Heart right ventricle (tissue), 16 donors: ENCODE measurements at regions of chr16 and their contacts with region 1.

Region 1: DNA sequence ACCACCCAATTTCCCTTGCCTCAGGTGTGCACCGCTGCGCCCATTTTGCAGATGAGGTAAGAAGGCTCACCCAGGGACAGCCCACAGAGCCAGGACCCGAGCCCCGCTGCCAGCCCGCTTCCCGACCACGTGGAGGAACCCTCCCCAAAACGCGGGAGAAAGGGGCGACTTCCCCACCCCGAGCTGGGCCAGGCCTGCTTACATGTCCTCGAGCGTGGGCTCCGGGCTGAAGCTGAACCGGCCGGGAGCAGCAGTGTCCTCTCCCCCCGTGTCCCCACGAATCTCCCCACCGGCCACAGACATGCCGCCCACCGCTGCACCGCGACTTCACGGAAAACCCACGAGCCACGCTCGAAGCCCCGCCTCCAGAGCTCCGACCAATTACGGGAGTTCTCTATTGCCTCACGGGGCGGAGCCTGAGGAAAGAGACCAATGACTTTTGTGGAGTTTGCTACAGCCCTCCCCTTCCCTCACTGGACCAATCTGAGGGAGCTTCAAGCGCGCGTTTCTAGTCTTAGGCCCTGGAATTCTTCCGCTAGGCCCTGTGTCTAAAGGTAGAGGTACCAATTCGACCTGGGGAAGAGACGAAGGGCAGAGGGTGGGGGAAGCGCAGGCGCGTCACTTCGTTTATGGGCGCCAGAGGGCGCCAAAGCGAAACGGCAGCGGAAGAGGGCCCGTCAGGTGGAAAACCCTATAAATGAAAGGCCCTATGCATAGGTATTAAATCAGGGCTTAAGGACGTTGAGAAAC is at the start of gene DCTPP1:
- DNase-seq: peak; percentile 90 to 98
- ATAC-seq: peak; percentile 97 to 99 (median 99)
- H3K4me3 ChIP-seq: peak within 1 kb of the TSS; percentile 63 to 97 (median 72)
- H3K27ac ChIP-seq: peak within 1 kb of the TSS in 9 of 10 donors; percentile 60 to 83 (median 74)
- H3K4me1 ChIP-seq: peaks cover 3 to 33% (median 19%) of the 10 kb centered on the region in 9 donors
- H3K27me3 ChIP-seq: no peaks in the 10 kb centered on the region
- CTCF ChIP-seq: peak; percentile 52 to 84 (median 78)
- total RNA-seq, gene DCTPP1: 22.8 to 39.9 (median 29.7) TPM

Region 2: DNA sequence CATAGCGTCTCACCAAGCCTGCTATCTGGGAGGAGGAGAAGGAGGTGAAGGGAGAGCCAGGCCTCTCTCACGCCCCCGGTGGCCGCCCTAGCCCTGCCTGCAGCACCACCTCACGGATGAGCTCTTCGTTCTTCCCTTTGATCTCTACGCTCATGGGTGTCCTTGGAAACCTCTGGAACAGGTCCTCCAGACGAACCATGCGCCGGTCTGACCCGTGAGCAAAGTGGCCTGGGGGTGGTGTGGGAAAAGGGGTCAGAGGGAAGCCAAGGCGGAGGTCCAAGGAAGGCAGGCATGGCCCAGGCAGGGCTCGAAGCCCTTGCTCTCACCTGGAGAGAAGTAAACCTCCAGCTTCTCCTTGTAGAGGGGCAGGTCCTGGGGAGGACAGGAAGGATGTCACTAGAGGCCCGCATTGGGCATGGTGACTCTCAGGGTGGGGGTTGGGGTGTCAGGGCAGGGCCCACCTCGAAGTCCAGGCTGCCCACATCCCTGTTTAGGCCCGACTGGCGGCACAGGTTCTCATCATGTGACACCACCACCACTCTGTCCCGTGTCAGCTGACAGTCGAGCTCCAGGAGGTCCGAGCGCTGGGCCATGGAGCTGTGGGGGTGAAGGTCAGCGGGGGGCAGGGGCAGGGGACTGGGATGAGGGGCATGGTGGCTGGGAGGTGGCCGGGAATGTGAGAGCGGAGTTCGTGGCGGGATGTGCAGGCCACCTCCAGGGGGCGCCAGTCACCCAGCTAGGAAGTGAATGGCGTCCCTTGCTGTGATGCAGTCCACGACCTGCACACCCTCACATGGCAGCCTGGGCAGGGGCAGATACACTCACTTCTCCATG is 317.4 kb before region 1 on chr16:
- intact Hi-C with region 1: loop called in 1 of 10 experiments (anchors 10 kb)
- DNase-seq: peak in 1 of 2 donors; percentile 73
- ATAC-seq: peak in 7 of 8 donors; percentile 15 to 64 (median 50)
- H3K4me3 ChIP-seq: no peak overlapping the region
- H3K27ac ChIP-seq: no peak overlapping the region
- H3K4me1 ChIP-seq: peaks cover 0 to 9% (median 0%) of the 10 kb centered on the region in 9 donors
- H3K27me3 ChIP-seq: no peaks in the 10 kb centered on the region
- CTCF ChIP-seq: peak; percentile 32 to 71 (median 56)

Region 3: GRCh38 chr16:30482366-30482765 is 52.5 kb after region 1 on chr16:
- intact Hi-C with region 1: loop called in 1 of 10 experiments (anchors 10 kb)
- DNase-seq: no peak
- ATAC-seq: no peak
- H3K4me3 ChIP-seq: no peak overlapping the region
- H3K27ac ChIP-seq: no peak overlapping the region
- H3K4me1 ChIP-seq: peaks cover 0 to 8% (median 0%) of the 10 kb centered on the region in 9 donors
- H3K27me3 ChIP-seq: peaks cover 0 to 14% (median 0%) of the 10 kb centered on the region in 7 donors
- CTCF ChIP-seq: peak in 1 of 9 donors; percentile 9

Region 4: DNA sequence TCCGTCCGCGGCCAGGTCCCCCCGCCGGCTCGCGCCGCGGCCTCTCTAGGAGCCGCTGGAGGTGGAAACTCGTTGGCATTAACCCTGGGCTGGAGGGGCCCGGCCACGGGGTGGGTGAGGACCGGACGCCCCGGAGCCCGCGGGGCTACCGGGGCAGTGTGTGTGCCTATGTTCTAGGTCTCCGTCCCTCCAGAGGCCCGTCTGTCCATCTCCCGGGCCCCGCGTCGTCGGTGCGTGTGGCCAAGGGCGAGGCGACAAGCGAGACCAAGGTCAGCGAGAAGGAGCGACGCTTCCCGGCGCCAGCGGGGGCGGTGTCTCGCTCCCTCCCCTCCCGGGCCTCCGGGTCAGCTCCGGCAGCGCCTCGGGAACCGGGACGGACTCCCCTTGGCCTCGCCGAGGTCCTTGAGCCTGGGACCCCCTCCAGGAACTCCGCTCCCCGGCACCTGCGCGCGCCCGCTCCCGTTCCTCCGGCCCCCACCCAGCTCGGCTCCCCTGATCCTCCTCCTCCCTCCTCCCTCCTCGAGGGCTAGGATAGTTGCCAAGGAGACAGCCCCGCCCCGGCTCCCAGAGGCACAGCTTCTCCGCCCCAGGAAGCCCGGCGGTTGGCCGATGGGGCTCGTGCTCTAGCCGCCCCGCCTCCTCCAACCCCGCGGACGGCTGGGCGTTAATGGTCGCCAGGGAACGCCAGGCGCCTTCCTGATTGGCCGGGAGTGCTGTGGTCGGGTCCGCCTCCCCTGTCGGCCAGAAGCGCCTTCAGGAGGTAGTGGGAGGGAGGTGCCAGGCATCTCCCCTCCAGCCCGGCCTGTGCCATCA is 97.2 kb after region 1 on chr16:
- intact Hi-C with region 1: loop called in 1 of 10 experiments (anchors 5 kb)
- DNase-seq: peak; percentile 98 to 99
- ATAC-seq: peak; percentile 92 to 97 (median 95)
- H3K4me3 ChIP-seq: peak overlapping the region; percentile 52 to 87 (median 71)
- H3K27ac ChIP-seq: peak overlapping the region; percentile 94 to 100 (median 99)
- H3K4me1 ChIP-seq: peaks cover 8 to 43% (median 38%) of the 10 kb centered on the region in 9 donors
- H3K27me3 ChIP-seq: no peaks in the 10 kb centered on the region
- CTCF ChIP-seq: peak in 6 of 9 donors; percentile 23 to 50 (median 33)

Region 5: DNA sequence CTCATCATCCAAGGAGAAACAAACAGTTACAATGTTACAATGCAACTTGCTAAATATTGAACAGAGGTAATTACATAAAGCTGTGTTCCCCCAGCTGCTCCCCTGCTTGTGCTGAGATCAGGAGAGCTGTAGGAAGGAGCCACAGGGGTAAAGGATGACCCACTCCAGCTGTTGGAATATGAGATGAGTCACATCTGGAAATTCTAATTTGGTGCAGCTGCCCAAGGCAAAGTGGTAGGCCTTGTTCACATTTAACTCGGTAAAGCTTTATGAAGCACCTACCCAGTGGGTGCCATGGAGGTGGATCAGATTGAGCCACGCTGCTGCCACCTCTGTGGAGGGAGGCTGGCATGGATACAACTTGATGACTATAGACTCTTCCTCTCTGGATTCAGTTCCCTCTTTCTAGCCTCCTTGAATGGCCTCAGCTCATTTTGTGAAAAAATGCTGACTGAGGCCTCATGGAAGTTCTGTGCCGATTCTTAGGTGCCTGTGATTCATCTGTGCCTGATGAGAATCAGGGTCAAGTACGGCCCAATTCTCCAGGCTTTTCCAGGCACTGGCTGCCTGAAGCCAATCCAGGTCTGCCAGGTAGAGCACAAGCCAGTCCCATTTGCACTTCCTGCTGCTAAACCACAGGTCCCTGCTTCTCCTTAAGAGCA is 172.9 kb after region 1 on chr16:
- intact Hi-C with region 1: loop called in 2 of 10 experiments (anchors 1 to 5 kb)
- DNase-seq: no peak
- ATAC-seq: peak in 4 of 8 donors; percentile 9 to 34 (median 22)
- H3K4me3 ChIP-seq: no peak overlapping the region
- H3K27ac ChIP-seq: peak overlapping the region in 4 of 10 donors; percentile 8 to 77 (median 55)
- H3K4me1 ChIP-seq: peaks cover 3 to 47% (median 18%) of the 10 kb centered on the region in 9 donors
- H3K27me3 ChIP-seq: no peaks in the 10 kb centered on the region
- CTCF ChIP-seq: no peak

Region 6: DNA sequence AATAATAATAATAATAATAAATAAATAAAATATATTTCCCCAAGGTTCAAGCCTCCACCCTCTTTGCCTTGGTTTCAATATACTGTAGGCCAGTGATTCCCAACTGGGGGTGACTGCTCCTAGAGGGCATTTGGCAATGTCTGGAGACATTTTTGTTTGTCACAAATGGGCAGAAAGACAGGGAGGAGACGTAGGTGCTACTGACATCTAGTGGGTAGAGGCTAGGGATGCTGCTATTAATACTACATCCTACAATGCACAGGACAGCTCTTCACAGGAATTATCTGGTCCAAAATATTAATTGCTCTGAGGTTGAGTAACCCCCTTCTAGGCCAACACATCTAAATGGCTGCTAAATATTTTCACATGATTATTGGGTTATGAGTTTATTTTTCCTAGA is 208.1 kb after region 1 on chr16:
- intact Hi-C with region 1: loop called in 1 of 10 experiments (anchors 10 kb)
- DNase-seq: no peak
- ATAC-seq: no peak
- H3K4me3 ChIP-seq: no peak overlapping the region
- H3K27ac ChIP-seq: no peak overlapping the region
- H3K4me1 ChIP-seq: peaks cover 0 to 25% (median 11%) of the 10 kb centered on the region in 9 donors
- H3K27me3 ChIP-seq: no peaks in the 10 kb centered on the region
- CTCF ChIP-seq: peak in 6 of 9 donors; percentile 12 to 39 (median 27)